ENCODE measurements at regions of chr4 and their contacts with region 1.

Region 1: GRCh38 chr4:167290678-167291077 is 56.4 kb upstream of the SPOCK3 start:
- DNase-seq: no peak
- ATAC-seq: peak in 3 of 4 donors; percentile 44 to 63 (median 47)
- H3K4me3 ChIP-seq: no peak overlapping the region
- H3K27ac ChIP-seq: no peak overlapping the region
- H3K4me1 ChIP-seq: no peaks in the 10 kb centered on the region
- H3K27me3 ChIP-seq: no peaks in the 10 kb centered on the region
- CTCF ChIP-seq: peak; percentile 35 to 52 (median 47)
- POLR2A ChIP-seq: no peak

Region 2: DNA sequence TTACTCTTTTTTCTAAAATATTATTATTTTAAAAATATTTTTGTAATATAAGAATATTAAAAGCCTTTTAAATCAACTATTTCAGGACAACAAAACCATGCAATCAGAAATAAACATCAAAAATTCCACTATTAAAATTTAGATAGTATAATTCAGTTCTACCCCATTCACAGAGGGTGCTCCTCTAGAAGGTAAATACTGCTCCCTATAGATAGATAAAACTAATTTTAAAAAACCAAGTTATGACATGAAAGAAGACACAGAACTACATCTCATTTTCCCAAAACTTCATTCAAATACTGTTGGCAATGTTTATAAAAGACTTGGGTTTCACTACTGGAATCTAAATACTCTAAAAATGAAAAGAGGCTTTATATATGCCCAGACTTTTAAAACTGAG is 275.7 kb before region 1 on chr4:
- intact Hi-C with region 1: loop called in 1 of 2 experiments (anchors 10 kb)
- DNase-seq: no peak
- ATAC-seq: no peak
- H3K4me3 ChIP-seq: no peak overlapping the region
- H3K27ac ChIP-seq: no peak overlapping the region
- H3K4me1 ChIP-seq: no peaks in the 10 kb centered on the region
- H3K27me3 ChIP-seq: no peaks in the 10 kb centered on the region
- CTCF ChIP-seq: no peak
- POLR2A ChIP-seq: no peak

Measured in right lobe of liver (tissue), 6 donors.